ENCODE measurements at regions of chr1 and their contacts with region 1.

Region 1: DNA sequence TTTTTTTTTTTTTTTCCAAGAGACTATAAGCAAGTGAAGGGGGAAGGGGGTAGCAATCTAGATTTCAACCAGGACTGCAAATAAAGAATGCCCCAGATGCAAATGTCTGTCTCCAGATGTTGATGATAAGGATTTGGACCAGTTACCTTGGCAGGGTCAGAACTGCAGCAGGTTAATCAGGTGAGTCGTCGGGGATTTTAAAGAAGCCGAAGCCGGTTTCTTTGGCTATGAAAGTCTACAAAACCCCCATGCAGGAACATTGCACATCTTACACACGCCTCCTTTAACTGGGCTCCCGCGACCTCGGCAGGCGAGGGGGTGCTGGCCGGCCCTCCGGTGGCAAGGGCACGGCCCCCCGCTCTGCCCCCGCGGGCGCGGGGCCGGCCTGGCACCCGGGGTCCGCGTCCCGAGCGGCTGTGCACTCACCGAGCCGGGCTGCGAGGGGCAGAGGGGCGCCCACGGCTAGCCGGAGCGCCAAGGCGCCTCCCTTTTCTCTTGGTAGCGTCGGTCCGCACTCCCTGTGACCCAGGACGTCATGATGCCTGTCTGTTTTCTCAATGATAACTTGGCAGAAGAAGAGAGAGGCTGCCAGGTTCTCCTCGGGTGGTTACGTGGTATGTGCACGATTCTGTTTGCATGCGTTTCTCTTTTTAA is 366.3 kb upstream of the ESRRG start:
- DNase-seq: no peak

Region 2: DNA sequence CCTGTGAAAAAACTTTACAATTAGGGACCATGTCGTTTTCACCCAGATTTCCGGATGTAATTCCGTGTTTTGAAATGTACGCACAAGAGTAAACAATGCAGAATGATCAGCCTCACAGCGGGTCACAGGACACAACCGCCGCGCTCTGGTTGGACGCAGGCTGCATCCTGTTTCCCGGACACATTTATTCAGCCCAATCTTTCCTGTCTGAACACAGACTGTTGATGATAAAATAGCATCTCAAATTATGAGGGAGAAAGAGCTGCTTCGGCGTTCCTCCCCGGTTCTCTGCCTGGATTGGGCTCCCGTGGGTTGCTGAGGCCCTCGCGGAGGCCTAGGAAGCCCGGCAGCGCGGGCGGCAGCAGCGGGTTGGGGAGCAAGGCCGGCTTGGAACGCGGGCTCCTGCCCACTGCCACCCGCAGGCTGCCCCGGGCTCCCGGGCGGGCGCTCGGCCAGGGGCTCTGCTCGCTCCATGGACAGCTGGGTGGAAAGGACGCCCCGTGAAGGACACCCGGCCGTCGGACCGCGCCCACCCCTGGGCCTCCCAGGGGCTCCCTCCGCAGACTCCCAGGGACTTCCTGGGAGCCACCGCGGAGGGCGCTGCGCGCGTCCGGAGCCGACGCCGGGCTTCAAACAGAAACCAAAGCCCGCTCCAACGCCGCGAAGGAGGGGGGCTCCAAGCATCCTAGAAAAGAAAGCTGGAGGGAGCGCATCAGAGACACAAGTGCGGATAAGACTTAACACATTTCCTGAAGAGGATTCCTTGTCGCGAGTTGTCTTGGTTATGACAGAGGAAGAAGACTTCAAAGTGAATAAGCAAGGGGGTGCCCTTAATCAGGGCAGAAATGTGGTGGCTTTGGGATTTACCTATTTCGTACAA is 488.5 kb before region 1 on chr1:
- intact Hi-C with region 1: loop called (anchors 10 kb)
- DNase-seq: peak; percentile 87

Region 3: GRCh38 chr1:217134857-217135568 is 45.5 kb after region 1 on chr1:
- intact Hi-C with region 1: loop called (anchors 2 kb)
- DNase-seq: no peak

Region 4: DNA sequence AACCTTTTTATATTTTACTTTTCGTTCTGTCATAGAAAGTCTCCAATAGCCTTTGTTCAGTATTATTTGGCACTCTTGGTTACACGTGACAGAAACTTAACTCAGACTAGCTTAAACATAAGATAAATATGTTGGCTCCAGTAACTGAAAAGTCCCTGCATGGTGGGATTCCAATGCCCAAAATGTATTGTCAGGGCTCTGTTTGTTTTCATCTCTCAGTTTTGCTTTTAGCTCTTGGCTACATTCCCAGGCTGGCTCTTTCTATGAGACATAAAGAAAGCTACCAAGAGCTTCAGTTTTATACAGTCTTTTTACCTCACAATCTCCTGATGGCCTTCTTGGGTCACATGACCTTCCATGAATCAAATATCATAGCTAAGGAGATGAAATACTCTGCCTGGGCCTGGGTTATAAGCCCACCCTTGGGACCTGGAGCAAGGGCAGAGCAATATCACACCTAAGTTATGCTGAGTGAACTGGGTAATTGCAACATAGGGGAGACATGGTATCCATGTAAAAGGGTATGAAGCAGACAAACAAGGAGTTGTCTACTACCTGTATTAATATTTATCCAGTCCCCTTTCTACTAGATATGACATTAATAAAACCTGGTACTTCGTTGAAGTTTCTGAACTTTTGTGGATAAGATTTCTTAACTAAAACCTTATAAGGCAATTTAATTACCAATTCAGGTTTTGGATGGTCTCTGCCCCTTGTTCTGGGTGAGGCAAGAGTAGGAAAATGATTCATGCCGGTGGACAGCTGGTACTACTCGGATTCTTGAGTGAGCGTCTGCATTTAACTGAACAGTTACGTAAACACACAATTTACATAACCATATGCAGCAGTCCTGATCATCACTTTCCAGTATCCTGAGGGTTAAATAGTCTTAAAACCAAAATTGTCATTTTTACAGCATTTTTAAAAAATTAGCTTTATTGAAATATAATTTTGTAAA is 99.1 kb after region 1 on chr1:
- intact Hi-C with region 1: loop called (anchors 5 kb)
- DNase-seq: no peak

Region 5: GRCh38 chr1:217482356-217483102 is 393.0 kb after region 1 on chr1:
- intact Hi-C with region 1: no loop called
- DNase-seq: no peak